SK-N-SH (cell line): ENCODE measurements at regions of chr3 and their contacts with region 1.

Region 1: GRCh38 chr3:14124615-14125190 is at the starts of genes CHCHD4 and TMEM43:
- DNase-seq: peak; percentile 99
- H3K4me3 ChIP-seq: peak within 1 kb of the TSS; percentile 88 to 99
- H3K27ac ChIP-seq: peak within 1 kb of the TSS; percentile 90 to 93
- H3K4me1 ChIP-seq: peaks cover 15 to 34% of the 10 kb centered on the region in 2 experiments
- H3K27me3 ChIP-seq: no peaks in the 10 kb centered on the region
- CTCF ChIP-seq: no peak
- EP300 ChIP-seq: no peak
- RAD21 ChIP-seq: no peak
- polyA plus RNA-seq, gene CHCHD4: 15.4 and 17.3 TPM in 2 replicates
- polyA plus RNA-seq, gene TMEM43: 105 and 123 TPM in 2 replicates

Region 2: DNA sequence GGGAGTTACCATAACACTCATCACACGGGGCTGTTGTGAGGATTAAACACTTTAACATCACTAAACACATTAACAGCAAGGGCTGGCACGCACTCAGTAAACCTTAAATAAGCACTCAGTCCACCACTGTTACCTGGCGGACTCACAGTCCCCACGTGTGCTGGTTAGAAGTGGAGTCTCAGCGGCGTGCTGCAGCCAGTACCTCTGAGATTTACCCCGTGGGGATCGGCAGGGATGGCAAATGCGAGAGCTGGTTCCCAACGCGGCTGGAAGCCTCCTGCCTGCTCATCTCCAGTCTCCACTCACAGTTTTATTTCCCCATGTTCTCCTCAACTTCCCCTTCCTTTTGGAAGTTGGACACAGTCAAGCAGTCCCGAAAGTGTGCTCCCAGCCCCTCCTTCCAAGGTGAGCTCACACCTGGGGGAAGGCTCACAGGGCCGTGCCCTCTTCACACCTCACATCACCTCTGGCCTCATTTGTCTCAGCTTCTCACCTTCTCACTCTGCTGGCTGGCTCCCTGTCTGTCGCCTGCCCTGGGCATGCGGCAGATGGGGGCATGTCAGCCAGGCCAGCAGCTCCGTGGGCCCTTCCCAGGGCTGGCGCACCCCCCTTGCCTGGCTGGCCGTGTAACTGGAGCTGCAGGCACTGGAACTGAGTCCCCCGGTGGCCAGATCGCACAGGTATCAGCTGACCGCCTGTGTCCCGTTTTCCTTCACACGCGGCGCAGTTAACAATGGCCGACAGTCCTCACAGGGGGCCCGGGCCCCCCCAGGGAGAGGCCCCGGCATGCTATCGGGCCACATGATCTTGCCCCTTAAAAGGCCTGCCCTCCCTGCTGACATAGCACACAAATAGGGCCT is 332.0 kb before region 1 on chr3:
- CTCF ChIA-PET with region 1: no interaction called
- POLR2A ChIA-PET with region 1: no interaction called
- DNase-seq: peak; percentile 46
- H3K4me3 ChIP-seq: no peak overlapping the region
- H3K27ac ChIP-seq: no peak overlapping the region; a peak in 1 of 4 replicates
- H3K4me1 ChIP-seq: peaks cover 0 to 25% of the 10 kb centered on the region in 2 experiments; a peak in 2 of 4 replicates
- H3K27me3 ChIP-seq: no peaks in the 10 kb centered on the region
- CTCF ChIP-seq: no peak
- EP300 ChIP-seq: no peak
- RAD21 ChIP-seq: no peak

Region 3: DNA sequence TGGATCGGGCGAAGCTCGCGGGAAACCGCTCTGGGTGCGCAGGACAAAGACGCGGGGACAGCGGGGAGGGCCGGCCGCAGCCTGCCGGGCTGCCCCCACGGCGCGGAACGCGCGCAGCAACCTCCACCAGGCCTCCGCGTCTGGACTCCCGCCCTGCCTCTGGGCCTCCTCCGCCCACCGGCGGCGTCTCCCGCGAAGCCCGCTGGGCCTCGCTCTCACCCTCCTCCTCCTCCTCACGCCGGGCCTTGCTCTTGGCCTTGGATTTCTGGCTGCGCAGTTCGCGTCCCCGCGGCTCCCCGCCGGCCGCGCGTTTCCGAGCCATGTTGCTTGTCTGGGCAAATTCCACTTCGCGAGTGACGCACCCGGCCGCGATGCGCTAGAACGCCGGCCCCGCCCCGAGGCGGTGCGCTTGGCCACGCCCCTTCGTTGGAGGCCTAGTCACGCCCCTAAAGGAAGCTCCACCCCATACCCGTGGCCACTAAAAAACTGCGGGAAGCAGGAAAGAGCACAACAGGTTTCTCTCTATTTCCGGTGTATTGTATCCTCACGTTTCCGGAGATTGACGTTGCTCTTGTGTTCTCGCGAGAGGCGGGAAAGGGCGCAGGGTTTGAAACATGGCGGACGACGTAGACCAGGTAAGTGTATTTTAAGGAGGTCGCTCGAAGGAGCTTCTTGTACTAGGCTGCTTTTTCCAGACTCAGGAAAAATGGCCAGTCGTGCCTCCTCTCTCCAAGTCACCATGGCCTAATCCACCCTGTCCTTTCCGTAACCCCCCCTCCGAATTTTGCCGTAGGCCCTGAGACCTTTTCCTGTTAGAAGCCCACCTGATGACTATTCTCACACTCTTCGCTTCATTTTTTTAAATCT is 53.8 kb after region 1 on chr3 and contains the starts of genes LSM3 and XPC:
- CTCF ChIA-PET with region 1: no interaction called
- POLR2A ChIA-PET with region 1: interaction called, 35 read pairs
- DNase-seq: peak; percentile 95
- H3K4me3 ChIP-seq: peak within 1 kb of the TSS; percentile 90 to 98
- H3K27ac ChIP-seq: peak within 1 kb of the TSS; percentile 90 to 94
- H3K4me1 ChIP-seq: peaks cover 17 to 34% of the 10 kb centered on the region in 2 experiments; a peak in 3 of 4 replicates
- H3K27me3 ChIP-seq: no peaks in the 10 kb centered on the region
- CTCF ChIP-seq: no peak
- EP300 ChIP-seq: no peak; a peak in 2 of 4 replicates
- RAD21 ChIP-seq: no peak
- polyA plus RNA-seq, gene LSM3: 5.1 and 6.4 TPM in 2 replicates
- polyA plus RNA-seq, gene XPC: 50.0 and 52.0 TPM in 2 replicates